Endothelial cell of umbilical vein (primary cell): ENCODE measurements at regions of chr3 and their contacts with region 1.

Region 1: DNA sequence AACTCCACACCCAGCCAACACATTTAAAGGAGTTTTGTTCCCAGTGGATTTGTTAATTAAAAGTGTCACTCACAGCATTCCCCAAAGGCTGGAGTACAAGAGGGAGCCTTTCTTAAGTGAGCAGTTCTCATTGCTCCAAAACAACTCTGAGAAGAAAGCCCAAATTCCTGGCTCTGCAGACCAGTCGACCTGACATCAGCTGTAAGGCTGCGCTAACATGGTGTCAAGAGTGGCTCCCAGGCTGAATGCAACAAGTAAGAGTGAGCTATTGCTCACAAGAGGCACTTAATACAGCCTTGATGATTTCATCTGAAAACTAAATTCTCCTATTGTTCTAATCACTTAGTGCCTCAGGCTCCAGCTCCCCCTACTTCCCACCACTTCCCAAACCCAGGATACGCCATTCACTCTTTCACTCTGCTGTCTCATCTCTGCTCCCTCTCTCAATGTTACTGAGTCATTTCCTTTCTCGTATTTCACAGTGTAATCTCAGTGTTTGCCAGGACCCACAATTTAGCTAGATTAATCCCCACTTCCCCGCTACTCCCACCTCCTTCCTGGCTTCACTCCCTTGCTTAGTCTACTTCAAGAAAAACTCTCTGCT is 81.8 kb downstream of the WWTR1 start:
- DNase-seq: peak; percentile 99
- H3K4me3 ChIP-seq: no peak overlapping the region
- H3K27ac ChIP-seq: peak overlapping the region; percentile 91
- H3K4me1 ChIP-seq: peaks cover 90% of the 10 kb centered on the region
- H3K27me3 ChIP-seq: no peaks in the 10 kb centered on the region
- CTCF ChIP-seq: no peak
- POLR2A ChIP-seq: peak; percentile 79

Region 2: GRCh38 chr3:149527531-149528339 is 48.3 kb before region 1 on chr3:
- CTCF ChIA-PET with region 1: interaction called, 7 read pairs
- POLR2A ChIA-PET with region 1: interaction called, 10 read pairs
- dilution Hi-C with region 1: no loop called
- intact Hi-C with region 1: no loop called
- DNase-seq: peak; percentile 85
- H3K4me3 ChIP-seq: no peak overlapping the region
- H3K27ac ChIP-seq: peak overlapping the region; percentile 62
- H3K4me1 ChIP-seq: peaks cover 43% of the 10 kb centered on the region
- H3K27me3 ChIP-seq: no peaks in the 10 kb centered on the region
- CTCF ChIP-seq: peak in 1 of 2 donors; percentile 50
- POLR2A ChIP-seq: no peak

Region 3: GRCh38 chr3:149547413-149547812 is 28.6 kb before region 1 on chr3:
- CTCF ChIA-PET with region 1: no interaction called
- POLR2A ChIA-PET with region 1: no interaction called
- dilution Hi-C with region 1: no loop called
- intact Hi-C with region 1: loop called (anchors 1 kb)
- DNase-seq: no peak
- H3K4me3 ChIP-seq: no peak overlapping the region
- H3K27ac ChIP-seq: no peak overlapping the region
- H3K4me1 ChIP-seq: peaks cover 52% of the 10 kb centered on the region
- H3K27me3 ChIP-seq: no peaks in the 10 kb centered on the region
- CTCF ChIP-seq: no peak
- POLR2A ChIP-seq: no peak

Region 4: GRCh38 chr3:149553781-149554451 is 22.1 kb before region 1 on chr3:
- CTCF ChIA-PET with region 1: interaction called, 3 read pairs
- POLR2A ChIA-PET with region 1: interaction called, 3 read pairs
- dilution Hi-C with region 1: no loop called
- intact Hi-C with region 1: loop called (anchors 2 kb)
- DNase-seq: peak; percentile 85
- H3K4me3 ChIP-seq: peak overlapping the region in 1 of 3 experiments; percentile 13
- H3K27ac ChIP-seq: peak overlapping the region; percentile 88
- H3K4me1 ChIP-seq: peaks cover 46% of the 10 kb centered on the region
- H3K27me3 ChIP-seq: no peaks in the 10 kb centered on the region
- CTCF ChIP-seq: no peak
- POLR2A ChIP-seq: no peak

Region 5: DNA sequence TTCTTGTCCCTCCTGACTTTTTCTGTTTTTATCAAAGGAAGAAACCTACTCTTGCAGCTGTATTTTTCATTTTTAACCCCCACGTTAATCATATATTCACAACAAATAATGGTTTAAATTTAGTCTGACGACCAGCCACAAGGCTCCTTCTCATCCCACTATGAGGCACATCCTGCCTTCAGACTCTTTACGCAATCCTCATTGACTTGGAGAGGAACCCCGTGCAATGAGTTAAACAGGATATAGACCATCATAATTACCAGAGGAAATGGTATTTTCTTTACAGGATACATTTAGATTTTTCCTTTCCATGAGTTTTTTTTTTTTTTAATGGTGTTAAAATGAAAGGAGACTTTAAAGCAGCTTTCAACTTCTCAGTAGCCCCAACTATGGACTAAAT is 13.3 kb after region 1 on chr3:
- CTCF ChIA-PET with region 1: interaction called, 17 read pairs
- POLR2A ChIA-PET with region 1: interaction called, 5 read pairs
- dilution Hi-C with region 1: no loop called
- intact Hi-C with region 1: loop called (anchors 1 kb)
- DNase-seq: peak; percentile 95
- H3K4me3 ChIP-seq: peak overlapping the region in 1 of 3 experiments; percentile 10
- H3K27ac ChIP-seq: peak overlapping the region; percentile 96
- H3K4me1 ChIP-seq: peaks cover 96% of the 10 kb centered on the region
- H3K27me3 ChIP-seq: no peaks in the 10 kb centered on the region
- CTCF ChIP-seq: no peak
- POLR2A ChIP-seq: peak; percentile 38

Region 6: GRCh38 chr3:149603126-149604074 is 27.3 kb after region 1 on chr3:
- CTCF ChIA-PET with region 1: interaction called, 4 read pairs
- POLR2A ChIA-PET with region 1: interaction called, 5 read pairs
- dilution Hi-C with region 1: no loop called
- intact Hi-C with region 1: loop called (anchors 1 kb)
- DNase-seq: no peak
- H3K4me3 ChIP-seq: no peak overlapping the region
- H3K27ac ChIP-seq: peak overlapping the region; percentile 83
- H3K4me1 ChIP-seq: peaks cover 93% of the 10 kb centered on the region
- H3K27me3 ChIP-seq: no peaks in the 10 kb centered on the region
- CTCF ChIP-seq: no peak
- POLR2A ChIP-seq: no peak

Region 7: GRCh38 chr3:149790268-149790667 is 214.2 kb after region 1 on chr3:
- CTCF ChIA-PET with region 1: no interaction called
- POLR2A ChIA-PET with region 1: no interaction called
- dilution Hi-C with region 1: no loop called
- intact Hi-C with region 1: no loop called
- DNase-seq: no peak
- H3K4me3 ChIP-seq: no peak overlapping the region
- H3K27ac ChIP-seq: no peak overlapping the region
- H3K4me1 ChIP-seq: no peaks in the 10 kb centered on the region
- H3K27me3 ChIP-seq: peaks cover 11 to 15% of the 10 kb centered on the region in 2 experiments
- CTCF ChIP-seq: no peak
- POLR2A ChIP-seq: no peak